Gastrocnemius medialis (tissue), 4 donors: ENCODE measurements at regions of chr10 and their contacts with region 1.

Region 1: DNA sequence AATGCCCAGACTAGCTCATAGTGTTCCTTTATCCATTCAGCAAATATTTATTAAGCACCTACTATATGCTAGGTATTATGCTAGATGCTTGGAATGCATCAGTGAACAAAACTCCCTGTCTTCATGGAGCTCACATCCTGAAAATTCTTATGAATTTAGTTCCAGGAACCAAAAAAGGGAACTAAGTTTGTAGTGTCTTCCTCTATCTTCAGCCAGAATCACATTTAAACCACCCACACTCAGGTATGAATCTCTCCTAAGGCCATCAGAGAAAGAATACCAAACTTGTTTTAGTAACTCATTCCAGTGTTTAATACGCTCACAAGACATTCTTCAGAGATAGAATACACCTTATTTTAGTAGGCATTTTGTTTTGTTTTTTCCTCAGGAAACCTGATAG is 10.1 kb upstream of the EGR2 start:
- DNase-seq: no peak
- ATAC-seq: no peak
- H3K4me3 ChIP-seq: no peak overlapping the region
- H3K27ac ChIP-seq: no peak overlapping the region
- H3K4me1 ChIP-seq: no peaks in the 10 kb centered on the region
- H3K27me3 ChIP-seq: no peaks in the 10 kb centered on the region
- CTCF ChIP-seq: no peak
- POLR2A ChIP-seq: no peak

Region 2: DNA sequence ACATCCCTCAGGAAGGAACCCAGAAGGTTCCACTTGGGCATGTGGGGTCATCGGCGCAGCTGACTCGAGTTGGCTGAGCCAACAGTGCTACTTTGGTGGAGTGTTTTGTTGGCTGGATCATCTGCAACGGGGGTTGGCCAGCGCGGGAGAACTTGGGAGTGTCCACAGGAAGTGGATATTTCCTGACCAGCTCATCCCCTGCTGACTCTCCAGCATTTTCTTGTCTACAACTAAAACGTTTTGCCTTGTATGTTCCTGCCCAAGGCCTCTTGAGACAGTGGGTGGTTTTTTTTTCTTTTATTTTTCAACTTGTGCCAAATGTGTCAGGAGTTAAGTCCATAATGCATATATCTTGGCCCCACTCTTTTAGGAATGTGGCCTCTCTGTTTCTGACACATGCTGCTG is 243.5 kb before region 1 on chr10:
- in situ Hi-C with region 1: no loop called
- intact Hi-C with region 1: no loop called
- DNase-seq: peak; percentile 38 to 76
- ATAC-seq: peak; percentile 68 to 70
- H3K4me3 ChIP-seq: no peak overlapping the region
- H3K27ac ChIP-seq: peak overlapping the region; percentile 31 to 63 (median 39)
- H3K4me1 ChIP-seq: no peaks in the 10 kb centered on the region
- H3K27me3 ChIP-seq: no peaks in the 10 kb centered on the region
- CTCF ChIP-seq: no peak
- POLR2A ChIP-seq: no peak

Region 3: DNA sequence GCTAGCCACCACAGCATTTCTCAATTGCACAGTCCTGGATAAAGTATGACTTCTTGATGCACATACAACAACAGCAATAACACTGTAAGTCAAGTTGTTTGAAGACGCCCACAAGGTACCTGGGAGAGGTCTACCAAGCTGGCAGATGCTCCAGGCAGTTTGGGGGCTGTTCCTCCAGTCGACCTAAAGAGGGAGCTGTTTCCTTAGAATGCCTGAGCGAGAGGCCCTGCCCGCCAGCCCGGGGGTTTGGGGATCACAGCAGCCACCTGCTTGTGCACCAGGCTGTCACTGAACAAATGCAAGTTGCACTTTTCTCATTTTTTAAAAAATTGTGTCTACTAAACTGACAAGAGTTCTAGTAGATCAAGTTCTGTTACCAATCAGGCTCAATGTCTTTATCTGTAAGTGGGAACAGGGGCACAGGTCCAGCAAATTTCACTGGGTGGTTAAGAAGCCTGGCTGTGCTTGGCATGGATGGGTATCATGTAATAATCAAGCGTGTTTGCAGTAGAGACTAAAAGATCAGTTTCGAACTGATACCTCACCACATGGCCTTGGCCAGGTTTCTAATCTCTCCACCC is 215.5 kb before region 1 on chr10:
- in situ Hi-C with region 1: loop called in 3 of 4 experiments (anchors 5 to 10 kb)
- intact Hi-C with region 1: no loop called
- DNase-seq: peak in 1 of 2 donors; percentile 23
- ATAC-seq: no peak
- H3K4me3 ChIP-seq: no peak overlapping the region
- H3K27ac ChIP-seq: no peak overlapping the region
- H3K4me1 ChIP-seq: no peaks in the 10 kb centered on the region
- H3K27me3 ChIP-seq: no peaks in the 10 kb centered on the region
- CTCF ChIP-seq: peak in 4 of 5 experiments; percentile 49 to 61 (median 54)
- POLR2A ChIP-seq: no peak

Region 4: DNA sequence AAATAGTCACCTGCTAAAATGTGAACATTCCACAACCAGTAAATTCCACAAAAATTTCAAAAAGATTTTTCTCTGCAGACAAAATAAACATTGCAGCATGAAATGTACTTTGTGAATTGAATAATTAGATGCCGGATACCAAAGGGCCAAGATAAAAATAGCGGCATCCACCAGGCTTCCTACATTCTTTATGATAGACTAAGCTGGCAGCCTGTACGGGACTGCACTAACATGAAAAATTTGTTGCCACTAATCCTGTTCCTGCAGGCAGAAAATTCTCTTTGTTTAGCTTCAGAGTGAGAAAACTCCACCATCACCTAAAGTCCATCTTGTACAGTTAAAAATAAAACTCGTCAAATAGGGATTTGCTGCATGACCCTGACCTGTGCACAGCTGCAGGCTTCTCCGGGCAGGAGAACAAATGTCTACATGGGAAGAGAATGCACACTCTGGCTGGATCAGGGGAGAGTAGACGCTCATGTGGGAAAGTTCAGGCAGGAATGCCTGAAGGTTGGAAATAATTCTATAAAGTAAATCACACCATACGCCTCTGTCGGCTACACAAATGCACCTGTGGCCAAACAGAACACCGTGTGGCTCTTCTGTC is 37.3 kb before region 1 on chr10:
- in situ Hi-C with region 1: no loop called
- intact Hi-C with region 1: no loop called
- DNase-seq: no peak
- ATAC-seq: no peak
- H3K4me3 ChIP-seq: no peak overlapping the region
- H3K27ac ChIP-seq: no peak overlapping the region
- H3K4me1 ChIP-seq: peaks cover 0 to 2% of the 10 kb centered on the region in 2 donors
- H3K27me3 ChIP-seq: no peaks in the 10 kb centered on the region
- CTCF ChIP-seq: no peak
- POLR2A ChIP-seq: no peak

Region 5: GRCh38 chr10:63331586-63331985 is 505.3 kb after region 1 on chr10:
- in situ Hi-C with region 1: no loop called
- intact Hi-C with region 1: no loop called
- DNase-seq: no peak
- ATAC-seq: no peak
- H3K4me3 ChIP-seq: no peak overlapping the region
- H3K27ac ChIP-seq: no peak overlapping the region
- H3K4me1 ChIP-seq: no peaks in the 10 kb centered on the region
- H3K27me3 ChIP-seq: no peaks in the 10 kb centered on the region
- CTCF ChIP-seq: no peak
- POLR2A ChIP-seq: no peak